Activated CD4-positive, alpha-beta memory T cell treated with anti-CD3 and anti-CD28 coated beads for 36 hours (primary cell): ENCODE measurements at regions of chr17 and their contacts with region 1.

Region 1: GRCh38 chr17:44331249-44331760 is 6.7 kb upstream of the SLC25A39 start:
- DNase-seq: peak; percentile 80
- H3K4me3 Mint-ChIP-seq: no peak overlapping the region
- H3K27ac Mint-ChIP-seq: peak overlapping the region; percentile 38
- H3K4me1 Mint-ChIP-seq: peaks cover 12% of the 10 kb centered on the region
- H3K27me3 Mint-ChIP-seq: no peaks in the 10 kb centered on the region

Region 2: DNA sequence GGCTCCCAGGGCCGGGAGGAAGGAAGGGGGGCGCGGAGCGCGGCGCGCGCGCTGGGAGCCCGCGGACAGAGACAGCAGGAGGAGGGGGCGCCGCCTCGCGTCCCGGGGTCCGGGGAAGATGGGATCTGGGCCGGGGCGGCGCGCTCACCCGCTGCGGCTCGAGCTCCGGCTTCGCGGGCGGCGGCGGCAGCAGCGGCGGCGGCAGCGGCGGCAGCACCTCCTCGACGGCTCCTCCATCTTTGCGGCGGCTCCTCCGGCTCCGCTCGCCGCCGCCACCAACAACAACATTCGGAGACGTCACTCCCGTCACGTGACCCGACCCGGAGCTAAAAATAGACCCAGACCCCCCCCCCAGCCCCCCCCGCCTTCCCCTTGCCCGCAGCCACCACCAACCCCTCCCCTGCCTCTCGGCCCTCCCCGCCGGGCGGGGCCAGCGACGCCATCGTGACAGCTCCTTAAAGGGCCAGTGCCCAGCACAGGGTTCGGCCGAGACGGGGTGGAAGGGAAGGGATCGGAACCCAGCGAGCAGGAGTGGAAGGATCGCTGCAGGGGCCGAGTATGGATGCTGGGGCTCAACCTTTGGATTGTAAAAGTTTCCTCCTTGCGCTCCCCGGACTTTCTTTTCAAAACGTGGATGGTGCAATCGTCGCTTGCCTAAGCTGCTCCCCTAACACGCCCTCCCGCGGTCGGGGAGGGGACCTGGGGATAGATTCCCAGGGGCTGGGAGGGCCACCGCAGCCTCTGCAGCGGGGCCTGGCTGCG is 207.8 kb before region 1 on chr17 and contains the start of gene HDAC5:
- CTCF ChIA-PET with region 1: interaction called, 4 read pairs
- POLR2A ChIA-PET with region 1: no interaction called
- intact Hi-C with region 1: loop called (anchors 5 kb)
- DNase-seq: peak; percentile 97
- H3K4me3 Mint-ChIP-seq: peak within 1 kb of the TSS; percentile 86
- H3K27ac Mint-ChIP-seq: peak within 1 kb of the TSS; percentile 92
- H3K4me1 Mint-ChIP-seq: peaks cover 25% of the 10 kb centered on the region
- H3K27me3 Mint-ChIP-seq: no peaks in the 10 kb centered on the region
- total RNA-seq, gene HDAC5: 18.0 to 19.0 TPM

Region 3: GRCh38 chr17:44210342-44211192 is 120.7 kb before region 1 on chr17:
- CTCF ChIA-PET with region 1: interaction called, 69 read pairs
- POLR2A ChIA-PET with region 1: interaction called, 6 read pairs
- intact Hi-C with region 1: loop called (anchors 1 kb)
- DNase-seq: peak; percentile 95
- H3K4me3 Mint-ChIP-seq: peak overlapping the region; percentile 70
- H3K27ac Mint-ChIP-seq: peak overlapping the region; percentile 92
- H3K4me1 Mint-ChIP-seq: peaks cover 64% of the 10 kb centered on the region
- H3K27me3 Mint-ChIP-seq: no peaks in the 10 kb centered on the region

Region 4: GRCh38 chr17:44344939-44345453 is 13.7 kb after region 1 on chr17 and contains the start of gene GRN:
- CTCF ChIA-PET with region 1: interaction called, 28 read pairs
- POLR2A ChIA-PET with region 1: interaction called, 3 read pairs
- intact Hi-C with region 1: loop called (anchors 2 kb)
- DNase-seq: peak; percentile 93
- H3K4me3 Mint-ChIP-seq: peak within 1 kb of the TSS; percentile 82
- H3K27ac Mint-ChIP-seq: peak within 1 kb of the TSS; percentile 66
- H3K4me1 Mint-ChIP-seq: peaks cover 21% of the 10 kb centered on the region
- H3K27me3 Mint-ChIP-seq: no peaks in the 10 kb centered on the region
- total RNA-seq, gene GRN: 59.7 to 62.4 TPM

Region 5: GRCh38 chr17:44417553-44417952 is 86.2 kb after region 1 on chr17:
- CTCF ChIA-PET with region 1: no interaction called
- POLR2A ChIA-PET with region 1: no interaction called
- intact Hi-C with region 1: no loop called
- DNase-seq: peak; percentile 52
- H3K4me3 Mint-ChIP-seq: no peak overlapping the region
- H3K27ac Mint-ChIP-seq: peak overlapping the region; percentile 54
- H3K4me1 Mint-ChIP-seq: peaks cover 16% of the 10 kb centered on the region
- H3K27me3 Mint-ChIP-seq: no peaks in the 10 kb centered on the region

Region 6: GRCh38 chr17:44522883-44523671 is 191.8 kb after region 1 on chr17:
- CTCF ChIA-PET with region 1: interaction called, 10 read pairs
- POLR2A ChIA-PET with region 1: no interaction called
- intact Hi-C with region 1: no loop called
- DNase-seq: peak; percentile 82
- H3K4me3 Mint-ChIP-seq: no peak overlapping the region
- H3K27ac Mint-ChIP-seq: no peak overlapping the region
- H3K4me1 Mint-ChIP-seq: no peaks in the 10 kb centered on the region
- H3K27me3 Mint-ChIP-seq: peaks cover 12% of the 10 kb centered on the region

Region 7: DNA sequence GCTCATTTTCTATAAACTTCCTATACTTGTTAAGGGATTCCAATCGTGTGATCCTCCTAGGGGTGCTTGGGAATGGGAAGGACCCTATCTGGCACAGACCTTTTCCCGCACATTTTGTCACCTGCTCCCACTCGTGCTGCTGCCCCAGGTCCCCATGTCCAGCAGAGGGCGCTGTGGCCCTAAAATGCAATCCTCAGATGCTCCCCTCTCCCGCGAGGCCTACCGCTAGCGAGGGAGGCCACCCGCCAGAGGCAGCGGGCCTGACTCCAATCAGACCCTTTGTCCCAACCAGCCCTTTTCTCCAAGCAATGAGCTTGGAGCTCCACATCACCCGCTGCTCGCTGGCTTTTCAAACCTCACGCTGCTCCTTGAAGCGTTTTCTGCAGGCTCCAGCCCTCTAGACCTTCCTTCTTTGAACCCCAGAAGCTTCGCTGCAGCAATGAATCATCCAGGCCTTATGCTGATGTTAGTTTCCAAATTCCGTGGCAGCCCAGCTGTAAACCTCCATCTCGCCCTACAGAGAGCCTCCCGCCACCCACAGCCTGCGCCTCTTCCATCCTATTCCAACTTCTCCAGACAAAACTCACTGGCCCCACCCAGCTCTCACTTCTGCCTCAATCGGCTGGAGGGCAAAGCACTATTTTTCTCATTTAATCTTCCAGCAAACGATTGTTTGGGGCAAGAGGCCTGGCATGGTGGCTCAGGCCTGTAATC is 202.4 kb after region 1 on chr17:
- CTCF ChIA-PET with region 1: no interaction called
- POLR2A ChIA-PET with region 1: no interaction called
- intact Hi-C with region 1: no loop called
- DNase-seq: peak; percentile 91
- H3K4me3 Mint-ChIP-seq: peak overlapping the region; percentile 6
- H3K27ac Mint-ChIP-seq: no peak overlapping the region
- H3K4me1 Mint-ChIP-seq: peaks cover 8% of the 10 kb centered on the region
- H3K27me3 Mint-ChIP-seq: peaks cover 3% of the 10 kb centered on the region